Activated B cell treated with CpG ODN at 0.5 μM for 24 hours (primary cell): ENCODE measurements at regions of chr7 and their contacts with region 1.

Region 1: DNA sequence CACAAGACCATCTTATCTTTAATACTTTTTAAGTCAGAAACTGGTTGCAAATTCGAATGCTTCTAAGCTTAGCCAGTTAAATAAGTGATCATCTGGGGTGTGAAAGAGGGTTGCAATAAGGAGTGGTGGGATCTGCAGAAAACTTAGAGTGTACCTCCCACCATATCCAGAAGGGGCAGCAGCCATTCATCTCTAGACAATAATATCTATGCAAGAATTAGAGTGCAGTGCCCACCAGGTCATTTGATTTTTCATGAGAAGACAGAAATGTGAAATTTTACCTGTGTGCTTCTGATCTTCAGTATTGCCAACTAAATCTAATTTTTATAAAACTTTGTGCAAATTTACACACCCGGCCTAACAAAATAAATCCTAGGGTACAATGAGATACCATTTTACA is 127.2 kb upstream of the SP4 start:
- DNase-seq: no peak
- ATAC-seq: no peak
- H3K4me3 Mint-ChIP-seq: no peak overlapping the region
- H3K27ac Mint-ChIP-seq: no peak overlapping the region
- H3K4me1 Mint-ChIP-seq: peaks cover 6% of the 10 kb centered on the region
- H3K27me3 Mint-ChIP-seq: no peaks in the 10 kb centered on the region
- CTCF ChIP-seq: no peak

Region 2: DNA sequence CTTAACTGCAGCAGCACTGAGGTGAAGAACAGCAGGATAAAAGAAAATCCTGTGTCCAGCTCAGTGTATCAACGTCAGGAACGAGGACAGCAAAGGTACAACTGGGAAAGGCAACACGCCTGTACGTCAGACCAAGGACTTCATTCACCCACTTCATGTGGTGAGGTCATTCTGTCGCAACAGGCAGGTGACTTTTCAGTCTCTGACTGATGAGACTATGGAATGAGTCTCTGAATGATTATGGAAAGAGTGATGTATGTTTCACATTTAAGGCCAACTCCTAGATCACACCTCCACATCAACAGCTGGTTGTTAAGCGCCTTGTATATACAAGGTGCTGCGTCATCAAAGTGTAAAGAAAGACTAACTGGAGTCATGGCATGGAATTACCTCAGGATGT is 216.4 kb before region 1 on chr7:
- CTCF ChIA-PET with region 1: no interaction called
- POLR2A ChIA-PET with region 1: no interaction called
- intact Hi-C with region 1: no loop called
- DNase-seq: no peak
- ATAC-seq: no peak
- H3K4me3 Mint-ChIP-seq: no peak overlapping the region
- H3K27ac Mint-ChIP-seq: no peak overlapping the region
- H3K4me1 Mint-ChIP-seq: no peaks in the 10 kb centered on the region
- H3K27me3 Mint-ChIP-seq: peaks cover 2% of the 10 kb centered on the region
- CTCF ChIP-seq: no peak

Region 3: DNA sequence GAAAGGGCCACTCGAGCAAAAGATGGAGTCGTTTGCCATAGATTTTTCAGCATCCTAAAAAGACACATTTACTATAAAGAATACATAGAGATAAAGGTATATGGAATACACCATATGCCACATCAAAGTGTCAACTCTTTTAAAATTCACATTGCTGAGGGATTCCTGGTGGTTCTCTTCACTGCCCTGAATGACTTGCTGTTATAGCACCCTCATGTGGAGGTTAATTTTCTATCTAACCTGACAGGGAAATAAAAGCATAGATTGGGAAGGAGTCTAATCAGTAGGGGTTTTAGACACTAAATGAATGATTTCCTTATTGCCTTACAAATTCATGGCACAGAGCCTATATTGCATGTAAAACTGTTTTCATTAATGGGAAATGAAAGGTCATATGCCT is 268.1 kb after region 1 on chr7:
- CTCF ChIA-PET with region 1: no interaction called
- POLR2A ChIA-PET with region 1: no interaction called
- intact Hi-C with region 1: loop called (anchors 1 kb)
- DNase-seq: no peak
- ATAC-seq: no peak
- H3K4me3 Mint-ChIP-seq: no peak overlapping the region
- H3K27ac Mint-ChIP-seq: no peak overlapping the region
- H3K4me1 Mint-ChIP-seq: no peaks in the 10 kb centered on the region
- H3K27me3 Mint-ChIP-seq: peaks cover 19% of the 10 kb centered on the region
- CTCF ChIP-seq: no peak